Activated CD4-positive, alpha-beta memory T cell treated with anti-CD3 and anti-CD28 coated beads, Interleukin-2, amount 10 ng/mL, durations not matched to agents 7 days and 5 days (primary cell): ENCODE measurements at regions of chr17 and their contacts with region 1.

Region 1: GRCh38 chr17:27879987-27880608 is 13.1 kb downstream of the LYRM9 start:
- DNase-seq: peak; percentile 77
- H3K4me3 Mint-ChIP-seq: no peak overlapping the region
- H3K27ac Mint-ChIP-seq: no peak overlapping the region
- H3K4me1 Mint-ChIP-seq: peaks cover 23% of the 10 kb centered on the region
- H3K27me3 Mint-ChIP-seq: no peaks in the 10 kb centered on the region

Region 2: DNA sequence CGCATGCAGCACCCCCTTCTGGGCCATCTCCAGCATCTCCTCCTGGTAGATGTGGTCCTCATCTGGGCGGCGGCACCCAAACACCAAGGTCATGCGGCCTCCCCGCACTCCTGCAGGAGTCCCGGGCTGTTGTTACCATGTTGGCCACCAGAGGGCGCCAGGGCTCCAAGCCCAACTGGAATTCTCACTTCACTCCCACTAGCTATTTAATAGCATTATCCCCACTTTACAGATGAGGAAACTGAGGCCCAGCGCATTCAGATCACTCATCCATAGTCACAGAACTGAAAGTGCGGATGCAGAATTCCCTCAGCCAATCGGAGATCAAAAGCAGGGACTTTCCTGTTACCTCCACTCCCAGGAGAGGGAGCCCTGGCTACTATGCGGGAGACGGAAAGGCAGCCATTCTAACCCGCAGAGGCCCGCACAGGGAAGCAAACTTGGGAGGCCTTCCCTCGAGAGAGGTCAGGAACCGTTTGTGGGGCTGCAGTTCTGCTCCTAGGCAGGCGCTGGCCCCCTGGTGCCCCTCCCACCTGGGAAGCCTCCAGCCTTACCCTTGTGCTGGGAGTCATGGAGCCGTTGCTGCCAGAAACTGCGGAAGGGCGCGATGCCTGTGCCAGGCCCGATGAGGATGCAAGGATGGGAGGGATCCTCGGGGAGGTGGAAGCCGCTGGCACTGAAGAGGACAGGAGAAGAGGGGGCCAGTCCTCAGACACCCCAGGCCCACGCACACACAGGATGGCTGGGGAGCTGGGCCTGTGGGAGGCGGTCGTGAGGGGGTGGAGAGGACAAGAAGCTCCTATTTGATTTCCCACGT is 119.8 kb before region 1 on chr17:
- CTCF ChIA-PET with region 1: interaction called, 65 read pairs
- POLR2A ChIA-PET with region 1: no interaction called
- DNase-seq: peak; percentile 73
- H3K4me3 Mint-ChIP-seq: no peak overlapping the region
- H3K27ac Mint-ChIP-seq: no peak overlapping the region
- H3K4me1 Mint-ChIP-seq: no peaks in the 10 kb centered on the region
- H3K27me3 Mint-ChIP-seq: no peaks in the 10 kb centered on the region

Region 3: GRCh38 chr17:27868576-27868975 is 11.5 kb before region 1 on chr17:
- CTCF ChIA-PET with region 1: no interaction called
- POLR2A ChIA-PET with region 1: no interaction called
- DNase-seq: no peak
- H3K4me3 Mint-ChIP-seq: no peak overlapping the region
- H3K27ac Mint-ChIP-seq: no peak overlapping the region
- H3K4me1 Mint-ChIP-seq: no peaks in the 10 kb centered on the region
- H3K27me3 Mint-ChIP-seq: no peaks in the 10 kb centered on the region

Region 4: GRCh38 chr17:28008542-28008941 is 128.4 kb after region 1 on chr17:
- CTCF ChIA-PET with region 1: no interaction called
- POLR2A ChIA-PET with region 1: no interaction called
- DNase-seq: no peak
- H3K4me3 Mint-ChIP-seq: no peak overlapping the region
- H3K27ac Mint-ChIP-seq: no peak overlapping the region
- H3K4me1 Mint-ChIP-seq: peaks cover 1% of the 10 kb centered on the region
- H3K27me3 Mint-ChIP-seq: peaks cover 11% of the 10 kb centered on the region